Naive thymus-derived CD4-positive, alpha-beta T cell (primary cell): ENCODE measurements at regions of chr5 and their contacts with region 1.

Region 1: DNA sequence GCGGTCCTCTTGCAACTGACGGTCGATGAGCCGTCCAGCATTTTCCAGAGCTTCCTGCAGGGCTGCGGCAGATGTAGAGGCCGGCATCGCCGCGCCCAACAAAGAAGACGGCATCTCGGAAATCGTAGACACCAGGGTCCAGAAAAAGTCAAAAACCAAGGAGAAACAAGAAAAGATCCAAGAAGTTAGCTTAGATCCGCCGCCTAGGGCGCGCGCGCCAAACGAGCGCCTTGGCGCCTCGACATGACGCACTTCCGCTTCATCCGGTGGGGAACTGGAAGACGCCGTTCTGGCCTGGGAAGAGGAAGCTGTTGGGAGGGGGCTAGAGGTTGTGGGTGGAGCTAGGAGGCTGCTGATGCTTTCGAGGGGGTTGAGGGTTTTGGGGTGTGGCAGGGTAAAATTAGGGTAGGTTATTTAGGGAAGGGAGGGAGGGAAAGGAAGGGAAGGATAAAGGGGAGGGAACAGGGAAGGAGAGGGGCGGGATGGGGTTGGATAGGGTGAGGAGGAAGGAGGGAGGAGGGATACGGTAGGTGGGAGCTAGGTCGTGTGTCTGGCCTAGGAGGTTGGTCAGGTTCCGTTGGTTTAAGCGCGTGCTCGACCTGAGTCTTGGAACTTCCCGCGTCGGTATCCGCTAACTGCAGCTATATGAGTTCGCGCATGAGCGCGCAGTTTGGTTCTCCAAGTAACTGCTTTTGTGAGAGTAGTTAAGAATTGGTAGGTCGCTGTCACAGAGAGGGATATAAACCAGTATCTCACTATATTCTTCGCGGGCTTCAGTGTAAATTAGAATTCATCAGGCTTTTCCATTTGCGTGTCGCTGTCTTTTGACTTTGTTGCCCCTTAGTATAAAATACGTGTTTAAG is at the start of gene NUP155:
- DNase-seq: peak; percentile 64 to 92 (median 87)
- ATAC-seq: peak; percentile 97
- H3K4me3 ChIP-seq: peak within 1 kb of the TSS; percentile 95
- H3K4me3 Mint-ChIP-seq: peak within 1 kb of the TSS; percentile 92 to 99 (median 94)
- H3K27ac ChIP-seq: peak within 1 kb of the TSS; percentile 89
- H3K27ac Mint-ChIP-seq: peak within 1 kb of the TSS; percentile 87 to 98 (median 96)
- H3K4me1 ChIP-seq: peaks cover 21 to 22% of the 10 kb centered on the region in 2 donors
- H3K4me1 Mint-ChIP-seq: peaks cover 27 to 48% (median 36%) of the 10 kb centered on the region in 7 donors
- H3K27me3 ChIP-seq: no peaks in the 10 kb centered on the region
- H3K27me3 Mint-ChIP-seq: no peaks in the 10 kb centered on the region
- total RNA-seq, gene NUP155: 21.3 to 51.2 (median 26.4) TPM

Region 2: DNA sequence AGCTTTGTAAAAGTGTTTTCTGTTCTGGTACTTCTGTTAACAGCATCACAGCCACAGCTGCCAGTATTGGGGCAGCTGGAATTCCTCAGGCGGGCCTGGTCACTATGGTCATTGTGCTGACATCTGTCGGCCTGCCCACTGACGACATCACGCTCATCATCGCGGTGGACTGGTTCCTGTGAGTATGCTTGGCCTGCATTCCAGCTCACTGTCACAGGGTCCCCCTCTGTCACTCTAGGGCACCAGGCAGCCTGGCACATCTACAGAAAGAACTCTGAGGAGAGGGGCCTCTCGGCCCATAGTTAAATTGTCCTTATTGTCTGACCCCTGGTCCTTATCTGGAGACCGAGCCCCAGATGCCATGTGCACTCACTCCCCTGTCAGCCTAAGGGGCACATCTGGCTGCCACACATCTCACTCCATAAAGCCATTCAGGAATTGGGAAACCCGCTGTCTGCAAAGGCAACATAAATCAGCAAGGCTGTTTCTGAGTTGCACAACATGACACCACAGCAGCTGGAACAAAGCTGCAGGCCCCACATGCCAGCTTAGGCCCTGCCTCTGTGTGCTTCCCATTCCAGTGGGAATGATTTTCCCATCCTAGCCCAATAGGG is 687.2 kb before region 1 on chr5:
- CTCF ChIA-PET with region 1: no interaction called
- POLR2A ChIA-PET with region 1: no interaction called
- intact Hi-C with region 1: no loop called
- DNase-seq: no peak
- ATAC-seq: peak; percentile 10
- H3K4me3 ChIP-seq: no peak overlapping the region
- H3K4me3 Mint-ChIP-seq: no peak overlapping the region
- H3K27ac ChIP-seq: no peak overlapping the region
- H3K27ac Mint-ChIP-seq: no peak overlapping the region
- H3K4me1 ChIP-seq: no peaks in the 10 kb centered on the region
- H3K4me1 Mint-ChIP-seq: peaks cover 0 to 5% (median 0%) of the 10 kb centered on the region in 7 donors
- H3K27me3 ChIP-seq: no peaks in the 10 kb centered on the region
- H3K27me3 Mint-ChIP-seq: peaks cover 0 to 13% (median 9%) of the 10 kb centered on the region in 5 donors

Region 3: DNA sequence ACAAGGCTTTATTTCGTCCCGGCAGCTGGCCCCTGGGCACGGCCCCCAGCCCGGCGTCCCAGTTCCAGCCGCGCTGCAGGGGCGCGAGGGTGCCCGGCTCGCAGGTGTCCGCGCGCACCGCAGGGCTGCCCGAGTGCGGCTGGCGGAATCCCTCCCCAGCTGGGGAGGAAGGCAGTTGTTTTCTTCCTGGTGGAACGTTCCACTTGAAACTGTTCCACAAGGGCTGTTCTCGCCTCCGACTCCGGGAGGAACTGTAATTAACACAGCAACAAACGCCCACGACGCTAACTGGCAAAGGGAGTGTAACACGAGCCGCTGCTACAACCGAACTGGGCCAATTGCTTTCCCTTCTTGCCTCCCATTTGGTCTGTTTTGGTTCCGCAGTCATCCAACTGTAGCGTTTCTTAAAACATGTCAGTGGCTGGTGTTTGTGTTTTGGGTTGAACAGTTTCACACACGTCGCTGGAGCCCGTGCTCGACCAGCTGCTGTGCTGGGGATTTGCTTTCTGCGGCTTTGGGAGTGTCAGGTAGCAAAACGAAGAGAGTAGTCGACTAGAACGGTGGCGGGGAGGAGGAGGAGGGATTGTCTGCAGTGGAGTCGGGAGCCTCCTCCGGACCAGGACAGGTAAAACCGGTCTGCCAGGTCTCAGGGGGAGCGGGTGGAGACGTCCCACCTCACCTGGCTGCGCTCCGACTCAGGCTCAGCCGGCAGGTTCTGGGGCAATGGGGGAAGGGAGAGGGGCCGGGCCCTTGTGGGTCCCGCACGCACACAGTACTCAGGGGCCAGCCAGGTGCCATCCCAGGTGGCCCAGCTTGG is 626.1 kb before region 1 on chr5:
- CTCF ChIA-PET with region 1: no interaction called
- POLR2A ChIA-PET with region 1: no interaction called
- intact Hi-C with region 1: loop called in 1 of 2 experiments (anchors 1 kb)
- DNase-seq: peak in 8 of 9 donors; percentile 14 to 45 (median 29)
- ATAC-seq: peak; percentile 60
- H3K4me3 ChIP-seq: peak overlapping the region; percentile 68
- H3K4me3 Mint-ChIP-seq: peak overlapping the region; percentile 85 to 95 (median 90)
- H3K27ac ChIP-seq: no peak overlapping the region
- H3K27ac Mint-ChIP-seq: peak overlapping the region in 3 of 9 donors; percentile 12 to 33 (median 28)
- H3K4me1 ChIP-seq: peaks cover 0 to 4% of the 10 kb centered on the region in 2 donors
- H3K4me1 Mint-ChIP-seq: peaks cover 12 to 19% (median 16%) of the 10 kb centered on the region in 7 donors
- H3K27me3 ChIP-seq: peaks cover 0 to 5% of the 10 kb centered on the region in 2 donors
- H3K27me3 Mint-ChIP-seq: peaks cover 46 to 64% (median 54%) of the 10 kb centered on the region in 5 donors

Region 4: GRCh38 chr5:37197340-37198050 is 173.6 kb before region 1 on chr5:
- CTCF ChIA-PET with region 1: no interaction called
- POLR2A ChIA-PET with region 1: interaction called, 5 read pairs
- intact Hi-C with region 1: loop called in 1 of 2 experiments (anchors 5 kb)
- DNase-seq: peak in 5 of 9 donors; percentile 6 to 32 (median 18)
- ATAC-seq: peak; percentile 69
- H3K4me3 ChIP-seq: peak overlapping the region; percentile 54
- H3K4me3 Mint-ChIP-seq: peak overlapping the region; percentile 78 to 96 (median 87)
- H3K27ac ChIP-seq: peak overlapping the region; percentile 70
- H3K27ac Mint-ChIP-seq: peak overlapping the region; percentile 83 to 98 (median 94)
- H3K4me1 ChIP-seq: peaks cover 6 to 9% of the 10 kb centered on the region in 2 donors
- H3K4me1 Mint-ChIP-seq: peaks cover 9 to 28% (median 25%) of the 10 kb centered on the region in 7 donors
- H3K27me3 ChIP-seq: no peaks in the 10 kb centered on the region
- H3K27me3 Mint-ChIP-seq: no peaks in the 10 kb centered on the region

Region 5: DNA sequence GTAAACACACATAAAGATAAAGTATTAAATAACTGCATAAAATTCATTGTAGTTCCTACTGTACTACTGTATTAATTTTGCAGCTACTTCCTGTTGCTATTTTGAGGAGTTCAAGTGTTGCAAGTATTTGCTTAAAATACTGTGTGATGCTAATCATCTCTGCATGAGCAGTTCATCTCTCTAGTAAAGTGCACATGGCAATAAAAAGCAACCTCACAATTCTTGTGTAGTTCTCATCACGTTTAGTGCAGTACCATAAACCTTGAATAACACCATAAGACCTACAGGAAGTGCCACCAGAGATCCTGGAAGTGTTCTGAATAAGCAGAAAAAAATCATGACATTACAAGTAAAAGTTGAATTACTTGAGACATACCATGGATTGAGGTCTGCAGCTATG is 156.5 kb before region 1 on chr5:
- CTCF ChIA-PET with region 1: no interaction called
- POLR2A ChIA-PET with region 1: no interaction called
- intact Hi-C with region 1: loop called in 1 of 2 experiments (anchors 10 kb)
- DNase-seq: peak in 1 of 9 donors; percentile 8
- ATAC-seq: no peak
- H3K4me3 ChIP-seq: no peak overlapping the region
- H3K4me3 Mint-ChIP-seq: peak overlapping the region in 1 of 10 donors; percentile 32
- H3K27ac ChIP-seq: no peak overlapping the region
- H3K27ac Mint-ChIP-seq: peak overlapping the region in 5 of 9 donors; percentile 14 to 53 (median 29)
- H3K4me1 ChIP-seq: peaks cover 0 to 9% of the 10 kb centered on the region in 2 donors
- H3K4me1 Mint-ChIP-seq: peaks cover 0 to 15% (median 5%) of the 10 kb centered on the region in 7 donors
- H3K27me3 ChIP-seq: no peaks in the 10 kb centered on the region
- H3K27me3 Mint-ChIP-seq: no peaks in the 10 kb centered on the region

Region 6: GRCh38 chr5:37637165-37637845 is 266.2 kb after region 1 on chr5:
- CTCF ChIA-PET with region 1: no interaction called
- POLR2A ChIA-PET with region 1: no interaction called
- intact Hi-C with region 1: no loop called
- DNase-seq: no peak
- ATAC-seq: no peak
- H3K4me3 ChIP-seq: no peak overlapping the region
- H3K4me3 Mint-ChIP-seq: no peak overlapping the region
- H3K27ac ChIP-seq: no peak overlapping the region
- H3K27ac Mint-ChIP-seq: no peak overlapping the region
- H3K4me1 ChIP-seq: no peaks in the 10 kb centered on the region
- H3K4me1 Mint-ChIP-seq: peaks cover 0 to 22% (median 0%) of the 10 kb centered on the region in 7 donors
- H3K27me3 ChIP-seq: no peaks in the 10 kb centered on the region
- H3K27me3 Mint-ChIP-seq: no peaks in the 10 kb centered on the region